WTC11 (cell line): ENCODE measurements at regions of chr18 and their contacts with region 1.

Region 1: DNA sequence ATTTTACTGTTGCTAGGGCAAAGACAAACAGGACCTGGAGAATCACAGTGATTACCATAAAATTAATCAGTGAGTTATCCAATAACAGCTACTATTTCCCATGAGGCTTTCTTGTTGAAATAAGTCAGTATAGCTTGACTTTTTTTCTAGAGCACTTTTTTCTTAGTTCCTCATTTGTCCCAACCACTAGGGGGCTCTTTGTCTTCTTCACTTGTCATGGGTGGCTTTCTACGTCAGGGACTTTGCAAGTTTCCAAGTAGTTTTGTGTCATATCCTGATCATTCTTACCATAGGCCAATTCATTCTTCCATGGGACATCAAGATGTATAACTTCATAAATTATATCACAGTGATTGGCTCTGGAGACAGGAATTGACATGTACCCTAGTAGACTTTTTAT is 1019.6 kb upstream of the PIK3C3 start:
- DNase-seq: no peak
- ATAC-seq: no peak
- H3K4me3 Mint-ChIP-seq: no peak overlapping the region
- H3K27ac Mint-ChIP-seq: no peak overlapping the region
- H3K4me1 Mint-ChIP-seq: peaks cover 5% of the 10 kb centered on the region
- H3K27me3 Mint-ChIP-seq: no peaks in the 10 kb centered on the region
- CTCF ChIP-seq: peak; percentile 47

Region 2: DNA sequence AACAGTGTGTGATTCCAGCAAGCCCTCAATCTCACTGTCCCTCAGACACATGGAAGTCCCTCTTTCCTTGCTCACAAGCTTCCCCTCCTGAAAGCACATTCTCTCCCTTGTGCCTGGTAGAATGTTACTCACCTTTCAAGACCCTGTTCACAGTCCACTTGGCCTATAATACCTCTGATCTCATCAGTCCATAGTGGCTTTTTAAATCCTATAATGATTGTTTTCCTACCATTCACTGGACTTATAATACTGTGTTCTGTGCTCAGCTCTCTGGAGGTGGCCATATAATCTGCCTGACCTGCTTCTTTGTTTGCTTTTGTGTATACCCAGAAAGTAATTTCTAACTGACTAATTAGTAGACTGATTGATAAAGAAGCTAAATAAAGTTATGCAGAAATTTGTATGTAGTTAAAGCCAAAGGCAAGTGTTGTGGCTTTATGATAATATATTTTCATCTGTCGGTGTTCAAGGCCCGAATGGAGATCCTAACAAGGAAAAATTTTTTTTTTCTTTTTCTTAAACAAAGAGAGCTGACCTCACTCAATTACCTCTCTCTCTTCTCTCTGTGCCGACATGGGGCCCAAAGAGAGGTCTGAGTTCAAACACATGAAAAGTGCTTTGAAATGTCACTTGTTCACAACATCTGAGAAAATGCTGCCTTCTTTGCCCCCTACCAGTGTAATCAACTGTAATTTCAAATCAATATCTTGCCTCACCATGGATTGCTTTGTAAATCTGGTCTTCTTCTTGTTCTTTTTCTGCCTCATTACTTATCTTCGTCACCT is 13.4 kb before region 1 on chr18:
- CTCF ChIA-PET with region 1: interaction called, 14 read pairs
- POLR2A ChIA-PET with region 1: no interaction called
- DNase-seq: no peak
- ATAC-seq: no peak
- H3K4me3 Mint-ChIP-seq: no peak overlapping the region
- H3K27ac Mint-ChIP-seq: no peak overlapping the region
- H3K4me1 Mint-ChIP-seq: no peaks in the 10 kb centered on the region
- H3K27me3 Mint-ChIP-seq: no peaks in the 10 kb centered on the region
- CTCF ChIP-seq: no peak

Region 3: GRCh38 chr18:41311571-41312547 is 376.4 kb after region 1 on chr18:
- CTCF ChIA-PET with region 1: interaction called, 12 read pairs
- POLR2A ChIA-PET with region 1: no interaction called
- DNase-seq: no peak
- ATAC-seq: peak; percentile 91
- H3K4me3 Mint-ChIP-seq: no peak overlapping the region
- H3K27ac Mint-ChIP-seq: peak overlapping the region; percentile 97
- H3K4me1 Mint-ChIP-seq: peaks cover 47% of the 10 kb centered on the region
- H3K27me3 Mint-ChIP-seq: peaks cover 4% of the 10 kb centered on the region
- CTCF ChIP-seq: no peak